T-cell (primary cell): ENCODE measurements at regions of chr1 and their contacts with region 1.

Region 1: DNA sequence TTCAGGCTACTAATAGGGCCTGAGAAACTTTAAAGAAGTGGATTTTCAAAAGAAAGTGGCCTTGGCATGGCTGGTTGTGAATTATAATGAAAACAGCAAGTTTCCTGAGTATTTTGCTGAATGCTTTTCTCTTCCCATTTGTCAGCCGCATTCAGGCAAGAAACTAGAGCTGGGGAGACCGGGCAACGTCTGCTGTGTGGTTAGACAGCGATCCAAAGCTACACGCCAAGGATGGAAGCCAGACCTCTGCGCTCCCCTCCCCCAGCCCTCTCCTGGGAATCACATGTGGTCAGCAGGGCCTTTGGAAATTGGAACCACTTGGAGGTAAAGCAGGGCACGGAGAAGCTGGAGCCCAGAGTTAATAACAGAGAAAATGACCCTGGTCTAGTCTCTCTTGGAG is 114.1 kb upstream of the CD34 start:
- DNase-seq: no peak
- ATAC-seq: no peak
- H3K4me3 ChIP-seq: no peak overlapping the region
- H3K4me3 Mint-ChIP-seq: no peak overlapping the region
- H3K27ac ChIP-seq: no peak overlapping the region
- H3K27ac Mint-ChIP-seq: no peak overlapping the region
- H3K4me1 ChIP-seq: no peaks in the 10 kb centered on the region
- H3K4me1 Mint-ChIP-seq: no peaks in the 10 kb centered on the region
- H3K27me3 ChIP-seq: peaks cover 0 to 12% of the 10 kb centered on the region in 2 experiments
- H3K27me3 Mint-ChIP-seq: no peaks in the 10 kb centered on the region

Region 2: GRCh38 chr1:208069317-208069716 is 44.3 kb after region 1 on chr1:
- CTCF ChIA-PET with region 1: interaction called in 1 of 2 experiments, 10 read pairs
- POLR2A ChIA-PET with region 1: no interaction called
- DNase-seq: no peak
- ATAC-seq: no peak
- H3K4me3 ChIP-seq: no peak overlapping the region
- H3K4me3 Mint-ChIP-seq: no peak overlapping the region
- H3K27ac ChIP-seq: no peak overlapping the region
- H3K27ac Mint-ChIP-seq: no peak overlapping the region
- H3K4me1 ChIP-seq: no peaks in the 10 kb centered on the region
- H3K4me1 Mint-ChIP-seq: no peaks in the 10 kb centered on the region
- H3K27me3 ChIP-seq: peaks cover 0 to 11% of the 10 kb centered on the region in 2 experiments
- H3K27me3 Mint-ChIP-seq: no peaks in the 10 kb centered on the region

Region 3: DNA sequence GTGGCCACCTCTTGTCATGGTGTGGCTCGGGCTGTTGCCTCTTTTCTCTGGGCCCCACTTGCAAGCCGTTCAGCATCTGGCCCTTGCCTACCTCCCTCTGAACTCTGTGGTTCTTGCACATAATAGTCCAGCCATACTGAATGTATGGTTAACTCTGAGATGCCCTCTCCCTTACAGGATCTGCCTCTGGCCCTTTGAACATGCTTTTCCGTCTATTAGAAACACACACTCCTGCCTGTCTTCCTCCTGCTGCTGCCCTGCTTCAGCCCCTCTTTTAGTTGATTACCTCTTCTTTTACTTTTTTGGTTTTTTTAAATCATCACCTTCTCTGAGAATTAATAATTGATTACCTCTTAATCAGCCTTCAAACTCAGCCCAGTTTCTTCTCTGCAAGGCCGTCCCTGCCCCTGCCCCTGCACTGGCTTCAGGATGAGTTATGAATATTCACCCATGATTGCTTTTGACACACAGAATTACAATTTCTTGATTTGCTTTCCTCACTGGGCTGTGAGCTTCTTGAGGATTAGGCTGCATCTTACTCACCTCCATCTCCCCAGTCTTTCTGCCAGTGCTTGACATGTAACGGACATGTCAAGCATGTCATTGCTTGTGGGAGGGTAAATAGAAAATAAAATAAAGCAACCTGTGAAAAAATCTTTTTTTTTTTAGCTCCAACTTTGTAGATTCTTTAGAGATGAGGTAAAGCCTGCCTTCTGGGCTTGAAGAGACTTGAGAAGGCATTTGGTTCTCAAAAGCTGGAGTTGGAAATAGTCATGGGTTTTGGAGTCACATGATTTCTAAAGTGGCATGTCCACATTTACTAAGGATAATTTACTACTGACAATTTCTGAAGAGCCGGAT is 60.9 kb after region 1 on chr1:
- CTCF ChIA-PET with region 1: interaction called, 11 to 12 read pairs
- POLR2A ChIA-PET with region 1: interaction called in 1 of 2 experiments, 3 read pairs
- DNase-seq: peak in 1 of 35 experiments; percentile 8
- ATAC-seq: no peak
- H3K4me3 ChIP-seq: peak overlapping the region; percentile 34 to 55
- H3K4me3 Mint-ChIP-seq: peak overlapping the region; percentile 72 to 77 (median 77)
- H3K27ac ChIP-seq: peak overlapping the region; percentile 37
- H3K27ac Mint-ChIP-seq: peak overlapping the region; percentile 86 to 94
- H3K4me1 ChIP-seq: peaks cover 0 to 7% of the 10 kb centered on the region in 2 experiments
- H3K4me1 Mint-ChIP-seq: peaks cover 20 to 25% (median 20%) of the 10 kb centered on the region in 3 donors
- H3K27me3 ChIP-seq: peaks cover 0 to 12% of the 10 kb centered on the region in 2 experiments
- H3K27me3 Mint-ChIP-seq: peaks cover 1 to 5% of the 10 kb centered on the region in 2 donors

Region 4: DNA sequence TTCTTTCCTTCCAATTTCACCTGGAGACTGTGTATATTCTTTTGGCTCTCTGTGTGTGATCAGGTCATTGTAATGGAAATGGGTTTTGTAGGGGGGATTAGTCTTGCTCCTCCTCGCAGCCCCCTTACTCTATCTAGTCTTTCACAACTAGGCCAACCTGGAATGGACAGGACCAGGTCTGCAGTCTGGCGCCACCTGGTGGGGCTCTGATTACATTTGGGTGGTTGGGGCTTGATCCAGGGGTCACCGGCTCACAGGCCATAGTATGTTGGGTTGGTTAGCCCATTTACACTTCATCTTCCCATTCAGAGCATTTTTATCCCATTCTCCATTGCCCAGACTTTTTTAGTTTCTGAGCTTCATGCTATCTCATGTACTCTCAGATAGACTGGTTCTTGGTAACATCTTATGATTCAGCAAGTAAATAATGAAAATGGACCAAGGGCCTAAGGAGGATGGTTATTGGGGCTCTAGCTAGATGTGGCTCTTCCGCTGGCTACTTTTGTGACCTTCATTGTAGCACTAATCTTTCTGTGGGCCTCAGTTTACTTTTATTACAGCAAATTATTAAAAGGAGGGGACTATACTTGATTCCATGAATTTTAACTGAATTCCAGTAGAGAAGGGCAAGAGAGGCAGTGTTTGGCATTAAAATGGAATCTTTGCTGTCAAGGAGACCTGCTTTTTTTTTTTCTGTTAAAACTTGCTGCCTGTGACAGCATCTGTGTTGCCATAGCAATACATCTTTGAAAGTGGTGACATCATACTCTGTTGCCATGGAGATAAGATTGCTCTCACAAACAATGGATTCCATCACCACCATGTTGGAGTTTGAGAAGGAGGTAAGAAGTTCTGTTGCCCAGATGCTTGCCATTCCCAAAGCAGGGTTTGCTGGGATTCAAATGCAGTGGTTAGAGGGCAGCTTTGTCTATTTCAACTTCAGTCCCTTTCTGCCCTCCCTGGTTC is 69.0 kb after region 1 on chr1:
- CTCF ChIA-PET with region 1: interaction called, 24 to 42 read pairs
- POLR2A ChIA-PET with region 1: no interaction called
- DNase-seq: peak in 31 of 35 experiments; percentile 9 to 69 (median 36)
- ATAC-seq: peak in 3 of 4 experiments; percentile 44 to 60 (median 50)
- H3K4me3 ChIP-seq: no peak overlapping the region
- H3K4me3 Mint-ChIP-seq: no peak overlapping the region
- H3K27ac ChIP-seq: no peak overlapping the region
- H3K27ac Mint-ChIP-seq: no peak overlapping the region
- H3K4me1 ChIP-seq: no peaks in the 10 kb centered on the region
- H3K4me1 Mint-ChIP-seq: no peaks in the 10 kb centered on the region
- H3K27me3 ChIP-seq: no peaks in the 10 kb centered on the region
- H3K27me3 Mint-ChIP-seq: no peaks in the 10 kb centered on the region

Region 5: GRCh38 chr1:208245185-208245705 is 220.2 kb after region 1 on chr1:
- CTCF ChIA-PET with region 1: interaction called, 30 to 81 read pairs
- POLR2A ChIA-PET with region 1: interaction called in 1 of 2 experiments, 4 read pairs
- DNase-seq: peak; percentile 35 to 86 (median 69)
- ATAC-seq: peak; percentile 49 to 63 (median 54)
- H3K4me3 ChIP-seq: peak overlapping the region; percentile 59 to 90
- H3K4me3 Mint-ChIP-seq: peak overlapping the region; percentile 70 to 82 (median 81)
- H3K27ac ChIP-seq: peak overlapping the region; percentile 27
- H3K27ac Mint-ChIP-seq: peak overlapping the region; percentile 4 to 80
- H3K4me1 ChIP-seq: peaks cover 4 to 14% of the 10 kb centered on the region in 2 experiments
- H3K4me1 Mint-ChIP-seq: peaks cover 8 to 12% (median 8%) of the 10 kb centered on the region in 3 donors
- H3K27me3 ChIP-seq: peaks cover 9 to 44% of the 10 kb centered on the region in 2 experiments
- H3K27me3 Mint-ChIP-seq: peaks cover 12 to 22% of the 10 kb centered on the region in 2 donors

Region 6: GRCh38 chr1:208349694-208350330 is 324.8 kb after region 1 on chr1:
- CTCF ChIA-PET with region 1: no interaction called
- POLR2A ChIA-PET with region 1: no interaction called
- DNase-seq: no peak
- ATAC-seq: no peak
- H3K4me3 ChIP-seq: no peak overlapping the region
- H3K4me3 Mint-ChIP-seq: no peak overlapping the region
- H3K27ac ChIP-seq: no peak overlapping the region
- H3K27ac Mint-ChIP-seq: no peak overlapping the region
- H3K4me1 ChIP-seq: no peaks in the 10 kb centered on the region
- H3K4me1 Mint-ChIP-seq: no peaks in the 10 kb centered on the region
- H3K27me3 ChIP-seq: no peaks in the 10 kb centered on the region
- H3K27me3 Mint-ChIP-seq: peaks cover 8 to 19% of the 10 kb centered on the region in 2 donors